GM12878 (cell line): ENCODE measurements at regions of chr14 and their contacts with region 1.

Region 1: GRCh38 chr14:76947078-76947837 is 81.2 kb downstream of the IRF2BPL start:
- DNase-seq: peak; percentile 67
- ATAC-seq: peak; percentile 87
- H3K4me3 ChIP-seq: no peak overlapping the region
- H3K27ac ChIP-seq: peak overlapping the region; percentile 64
- H3K4me1 ChIP-seq: peaks cover 29% of the 10 kb centered on the region
- H3K27me3 ChIP-seq: no peaks in the 10 kb centered on the region
- CTCF ChIP-seq: peak; percentile 45 to 72 (median 58)
- EP300 ChIP-seq: peak in 1 of 2 experiments; percentile 65; a peak in 2 of 4 replicates
- POLR2A ChIP-seq: no peak
- RAD21 ChIP-seq: peak; percentile 72

Region 2: DNA sequence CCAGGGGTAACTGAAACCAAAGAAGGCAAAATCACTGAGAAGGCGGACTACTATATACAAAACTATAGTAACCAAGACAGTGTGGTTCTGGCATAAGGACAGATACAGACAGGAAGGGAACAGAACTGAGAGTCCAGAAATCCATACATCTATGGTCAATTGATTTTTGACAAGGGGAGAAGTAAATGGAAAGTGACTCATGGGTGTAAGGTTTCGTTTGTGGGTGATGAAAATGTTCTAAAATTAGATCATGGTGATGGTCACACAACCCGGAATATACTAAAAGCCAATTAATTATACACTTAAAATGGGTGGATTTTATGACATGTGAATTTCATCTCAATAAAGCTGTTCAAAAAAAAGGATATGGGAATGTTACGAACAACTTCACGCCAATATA is 153.3 kb before region 1 on chr14:
- CTCF ChIA-PET with region 1: no interaction called
- POLR2A ChIA-PET with region 1: no interaction called
- RAD21 ChIA-PET with region 1: no interaction called
- SMC1A ChIA-PET with region 1: no interaction called
- in situ Hi-C with region 1: no loop called
- intact Hi-C with region 1: no loop called
- DNase-seq: no peak
- ATAC-seq: no peak
- H3K4me3 ChIP-seq: no peak overlapping the region
- H3K27ac ChIP-seq: no peak overlapping the region
- H3K4me1 ChIP-seq: no peaks in the 10 kb centered on the region
- H3K27me3 ChIP-seq: no peaks in the 10 kb centered on the region
- CTCF ChIP-seq: no peak
- EP300 ChIP-seq: no peak
- POLR2A ChIP-seq: no peak
- RAD21 ChIP-seq: no peak

Region 3: DNA sequence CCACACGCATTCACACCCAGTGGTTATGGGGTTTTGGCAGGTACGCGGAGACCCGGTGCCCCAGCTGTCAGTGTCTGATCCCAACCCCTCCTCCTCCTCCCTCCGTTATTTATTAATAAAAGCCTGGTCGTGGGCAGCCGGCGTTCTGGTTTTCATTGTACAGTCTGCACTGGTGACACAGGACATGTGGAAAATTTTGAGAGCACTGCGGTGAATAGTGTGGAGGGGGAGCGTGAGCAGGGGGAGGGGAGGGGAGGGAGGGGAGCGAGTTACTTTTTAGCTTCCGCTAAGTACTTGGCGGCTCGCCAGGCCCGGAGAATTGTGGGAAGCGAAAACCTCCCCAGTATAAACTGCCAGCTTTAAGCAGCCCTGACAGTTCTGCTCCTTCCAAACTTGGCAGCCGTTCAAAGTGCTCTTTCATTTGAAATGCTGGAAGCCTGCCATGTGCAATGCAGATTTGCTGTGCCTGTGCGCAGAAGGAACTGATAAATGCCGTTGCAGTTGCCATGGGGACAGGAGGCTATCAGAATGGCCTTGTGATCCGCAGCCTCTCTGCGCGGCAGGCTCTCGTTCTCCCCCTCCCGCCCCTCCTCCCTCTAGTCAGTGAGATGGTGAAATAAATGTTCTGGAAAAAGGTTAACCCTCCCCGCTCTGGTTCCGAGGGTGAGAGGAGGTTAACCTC is 92.9 kb after region 1 on chr14:
- CTCF ChIA-PET with region 1: interaction called, 17 read pairs
- POLR2A ChIA-PET with region 1: interaction called, 173 read pairs
- RAD21 ChIA-PET with region 1: interaction called, 19 read pairs
- SMC1A ChIA-PET with region 1: interaction called, 172 read pairs
- in situ Hi-C with region 1: no loop called
- intact Hi-C with region 1: loop called (anchors 1 kb)
- DNase-seq: peak; percentile 99
- ATAC-seq: peak; percentile 75
- H3K4me3 ChIP-seq: peak overlapping the region; percentile 50
- H3K27ac ChIP-seq: peak overlapping the region; percentile 93
- H3K4me1 ChIP-seq: peaks cover 87% of the 10 kb centered on the region
- H3K27me3 ChIP-seq: no peaks in the 10 kb centered on the region
- CTCF ChIP-seq: no peak
- EP300 ChIP-seq: peak; percentile 42 to 61
- POLR2A ChIP-seq: peak; percentile 55; the same call in 1 of the 2 replicates
- RAD21 ChIP-seq: no peak